ENCODE measurements at regions of chr4 and their contacts with region 1.

Region 1: GRCh38 chr4:187937557-187937956 is 58.0 kb upstream of the ZFP42 start:
- DNase-seq: no peak
- H3K4me3 ChIP-seq: no peak overlapping the region
- H3K27ac ChIP-seq: no peak overlapping the region
- H3K4me1 ChIP-seq: no peaks in the 10 kb centered on the region
- H3K27me3 ChIP-seq: no peaks in the 10 kb centered on the region
- CTCF ChIP-seq: no peak
- POLR2A ChIP-seq: no peak

Region 2: DNA sequence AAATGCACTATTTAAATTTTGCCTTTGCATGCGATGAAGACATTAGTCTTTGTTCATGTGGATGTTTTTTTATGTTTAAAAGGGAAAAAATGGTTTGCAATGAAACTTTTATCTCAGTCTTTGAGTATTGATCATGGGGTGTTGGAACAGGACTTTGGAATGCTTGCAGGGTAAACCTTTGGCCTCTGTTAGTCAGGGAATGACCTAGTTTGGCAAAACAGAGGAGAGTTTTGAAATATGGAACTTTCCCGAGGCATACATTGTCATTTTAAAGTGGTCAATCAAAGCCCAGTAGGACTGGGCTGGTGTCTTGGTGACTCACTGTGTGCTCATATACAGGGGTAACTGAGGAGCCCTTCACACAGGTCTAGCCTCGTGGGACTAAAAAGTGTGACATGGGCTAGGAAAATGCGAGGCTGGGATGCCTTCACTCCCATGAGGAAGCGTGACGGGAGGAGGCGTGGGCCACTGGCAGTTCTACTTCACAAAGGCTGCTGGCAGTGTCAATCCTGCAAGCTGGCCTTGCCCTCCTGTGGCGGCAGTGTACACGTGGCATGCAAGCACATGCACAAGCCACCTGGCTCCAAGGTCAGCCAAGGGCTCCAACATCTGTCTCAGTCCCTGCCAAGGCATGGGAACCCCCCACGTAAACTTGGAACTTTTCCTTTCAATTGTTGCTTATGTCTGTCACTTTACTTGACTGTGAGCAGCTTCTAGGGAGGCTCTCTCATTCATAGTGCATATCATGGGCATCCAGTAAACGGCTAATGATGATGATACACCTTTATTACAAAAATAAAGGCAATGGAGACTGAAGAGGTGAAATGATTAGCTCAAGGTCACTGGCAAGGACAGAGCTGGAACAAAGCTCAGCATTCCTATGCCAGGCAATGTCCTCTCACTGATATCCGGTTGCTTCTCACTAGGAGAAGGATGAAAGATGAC is 1676.8 kb before region 1 on chr4:
- intact Hi-C with region 1: loop called (anchors 5 kb)
- DNase-seq: no peak
- H3K4me3 ChIP-seq: no peak overlapping the region
- H3K27ac ChIP-seq: no peak overlapping the region
- H3K4me1 ChIP-seq: no peaks in the 10 kb centered on the region
- H3K27me3 ChIP-seq: no peaks in the 10 kb centered on the region
- CTCF ChIP-seq: no peak
- POLR2A ChIP-seq: no peak

Region 3: DNA sequence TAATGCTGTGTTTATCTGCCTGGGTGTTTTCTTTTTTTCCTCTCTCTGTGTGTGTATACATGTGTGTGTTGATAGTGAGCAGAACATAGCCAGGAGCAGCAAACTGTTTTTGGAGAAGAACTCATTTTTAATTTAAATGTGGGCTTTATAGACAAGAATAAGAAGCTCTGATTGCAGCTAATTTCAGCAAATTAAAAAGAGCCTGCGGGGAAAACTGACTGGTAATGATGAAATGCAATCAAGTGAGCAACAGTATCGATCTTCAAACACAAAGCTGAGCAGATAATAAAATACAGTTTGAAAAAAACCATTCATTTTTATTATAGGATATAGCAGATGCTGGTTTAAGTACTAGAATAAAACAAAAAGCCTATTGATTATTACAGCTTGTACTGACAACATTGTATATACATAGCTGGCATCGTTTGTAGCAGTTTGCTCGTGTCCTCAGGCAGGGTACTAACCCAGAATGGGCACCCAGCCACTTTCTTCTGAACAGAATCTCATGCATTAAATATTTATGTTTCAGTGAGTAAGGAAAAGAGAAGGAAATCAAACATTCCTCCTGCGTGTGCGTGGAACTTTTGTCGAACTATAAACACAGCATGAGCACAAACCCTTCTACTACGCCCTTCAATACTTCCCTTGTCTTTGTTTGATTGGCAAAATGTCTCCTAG is 15.5 kb before region 1 on chr4:
- intact Hi-C with region 1: loop called (anchors 1 kb)
- DNase-seq: no peak
- H3K4me3 ChIP-seq: no peak overlapping the region
- H3K27ac ChIP-seq: no peak overlapping the region
- H3K4me1 ChIP-seq: no peaks in the 10 kb centered on the region
- H3K27me3 ChIP-seq: no peaks in the 10 kb centered on the region
- CTCF ChIP-seq: no peak
- POLR2A ChIP-seq: no peak